HEK293 (cell line): ENCODE measurements at regions of chr7 and their contacts with region 1.

Region 1: DNA sequence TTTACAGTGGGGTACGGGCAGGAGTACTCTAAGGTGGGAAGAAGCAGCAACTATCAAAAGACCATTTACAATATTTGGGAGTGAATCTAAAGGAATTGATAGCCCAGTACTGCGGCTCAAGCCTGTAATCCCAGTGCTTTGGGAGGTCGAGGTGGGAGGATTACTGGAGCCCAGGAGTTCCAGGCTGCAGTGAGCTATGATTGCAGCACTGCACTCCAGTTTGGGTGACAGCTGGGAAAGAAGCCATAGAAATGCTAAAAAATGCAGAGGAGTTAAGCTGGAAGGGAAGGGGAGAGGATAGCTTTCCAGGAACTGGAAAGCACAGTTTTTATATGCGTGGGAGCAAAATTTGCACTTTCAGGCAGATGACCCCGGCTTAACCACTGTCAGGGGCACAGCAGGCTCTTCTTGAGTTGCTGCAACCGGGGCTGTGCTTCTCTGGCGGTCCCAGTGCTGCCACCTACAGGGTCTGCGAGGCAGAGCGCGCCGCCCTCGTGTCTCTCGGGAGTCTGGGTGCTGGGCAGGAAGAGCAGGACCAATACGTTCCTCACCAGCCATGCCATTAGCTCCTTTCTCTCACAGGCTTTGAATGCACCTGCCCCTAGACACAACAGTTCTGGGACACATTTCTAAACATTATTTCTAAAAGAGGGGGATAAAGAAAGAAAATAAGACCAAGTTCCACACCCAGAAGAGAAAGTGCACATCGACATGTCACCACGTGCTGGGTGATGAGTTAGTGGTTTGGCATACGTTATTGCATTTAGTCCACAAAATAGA is 10.1 kb upstream of the BMPER start:
- H3K4me3 ChIP-seq: no peak overlapping the region
- H3K27ac ChIP-seq: no peak overlapping the region
- H3K4me1 ChIP-seq: no peaks in the 10 kb centered on the region
- CTCF ChIP-seq: peak; percentile 67

Region 2: GRCh38 chr7:33757562-33758165 is 137.6 kb before region 1 on chr7:
- CTCF ChIA-PET with region 1: interaction called, 28 read pairs
- POLR2A ChIA-PET with region 1: no interaction called
- H3K4me3 ChIP-seq: no peak overlapping the region
- H3K27ac ChIP-seq: no peak overlapping the region
- H3K4me1 ChIP-seq: peaks cover 32% of the 10 kb centered on the region
- CTCF ChIP-seq: no peak

Region 3: DNA sequence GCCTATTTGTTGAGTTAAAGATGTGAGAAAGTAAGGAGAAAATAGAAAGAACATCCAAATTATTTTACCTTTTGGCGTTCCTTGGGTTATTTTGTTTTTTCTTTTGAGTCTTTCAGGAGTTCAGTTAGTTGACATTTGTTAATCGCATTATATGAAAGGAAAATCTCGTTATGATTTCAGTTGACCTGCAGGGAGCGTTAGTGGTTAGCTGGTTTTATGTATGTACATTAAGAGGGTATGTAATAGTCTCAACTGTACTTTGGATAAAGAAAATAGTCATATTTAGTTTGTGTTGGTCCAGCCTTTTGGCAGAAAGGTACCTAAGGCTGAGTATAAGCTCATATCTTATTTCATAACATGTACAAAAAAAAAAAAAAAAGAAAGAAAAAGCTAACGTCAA is 14.1 kb after region 1 on chr7:
- CTCF ChIA-PET with region 1: interaction called, 21 read pairs
- POLR2A ChIA-PET with region 1: no interaction called
- H3K4me3 ChIP-seq: no peak overlapping the region
- H3K27ac ChIP-seq: no peak overlapping the region
- H3K4me1 ChIP-seq: peaks cover 3% of the 10 kb centered on the region; the same call in 1 of the 2 replicates
- CTCF ChIP-seq: no peak